Activated CD4-positive, alpha-beta T cell treated with anti-CD3 and anti-CD28 coated beads for 36 hours (primary cell): ENCODE measurements at regions of chr3 and their contacts with region 1.

Region 1: GRCh38 chr3:115658337-115659181 is 35.2 kb downstream of the GAP43 start:
- DNase-seq: peak; percentile 88
- ATAC-seq: peak; percentile 90
- H3K4me3 Mint-ChIP-seq: peak overlapping the region; percentile 66
- H3K27ac Mint-ChIP-seq: peak overlapping the region; percentile 95
- H3K4me1 Mint-ChIP-seq: peaks cover 51% of the 10 kb centered on the region
- H3K27me3 Mint-ChIP-seq: peaks cover 2% of the 10 kb centered on the region

Region 2: DNA sequence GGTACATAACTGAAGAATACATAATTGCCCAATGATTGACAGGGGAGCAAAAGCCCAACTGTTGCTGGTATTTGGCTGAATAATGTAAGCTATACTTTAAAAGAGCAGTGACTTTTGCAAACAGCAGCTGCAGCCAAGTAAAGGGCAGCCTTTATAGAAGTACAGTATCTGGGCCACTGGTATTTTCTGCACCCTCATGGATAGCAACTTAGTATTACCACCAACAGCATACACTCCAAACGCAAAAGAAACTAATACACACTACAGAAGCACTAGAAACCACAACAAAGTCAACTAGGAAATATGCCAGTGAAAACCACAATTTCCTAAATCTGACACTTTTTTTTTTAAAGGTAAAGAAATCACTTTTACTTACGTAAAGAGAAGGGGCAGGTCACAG is 1158.6 kb before region 1 on chr3:
- CTCF ChIA-PET with region 1: no interaction called
- POLR2A ChIA-PET with region 1: no interaction called
- intact Hi-C with region 1: loop called in 1 of 2 experiments (anchors 10 kb)
- DNase-seq: no peak
- ATAC-seq: peak; percentile 84
- H3K4me3 Mint-ChIP-seq: no peak overlapping the region
- H3K27ac Mint-ChIP-seq: no peak overlapping the region
- H3K4me1 Mint-ChIP-seq: peaks cover 34% of the 10 kb centered on the region
- H3K27me3 Mint-ChIP-seq: peaks cover 11% of the 10 kb centered on the region

Region 3: DNA sequence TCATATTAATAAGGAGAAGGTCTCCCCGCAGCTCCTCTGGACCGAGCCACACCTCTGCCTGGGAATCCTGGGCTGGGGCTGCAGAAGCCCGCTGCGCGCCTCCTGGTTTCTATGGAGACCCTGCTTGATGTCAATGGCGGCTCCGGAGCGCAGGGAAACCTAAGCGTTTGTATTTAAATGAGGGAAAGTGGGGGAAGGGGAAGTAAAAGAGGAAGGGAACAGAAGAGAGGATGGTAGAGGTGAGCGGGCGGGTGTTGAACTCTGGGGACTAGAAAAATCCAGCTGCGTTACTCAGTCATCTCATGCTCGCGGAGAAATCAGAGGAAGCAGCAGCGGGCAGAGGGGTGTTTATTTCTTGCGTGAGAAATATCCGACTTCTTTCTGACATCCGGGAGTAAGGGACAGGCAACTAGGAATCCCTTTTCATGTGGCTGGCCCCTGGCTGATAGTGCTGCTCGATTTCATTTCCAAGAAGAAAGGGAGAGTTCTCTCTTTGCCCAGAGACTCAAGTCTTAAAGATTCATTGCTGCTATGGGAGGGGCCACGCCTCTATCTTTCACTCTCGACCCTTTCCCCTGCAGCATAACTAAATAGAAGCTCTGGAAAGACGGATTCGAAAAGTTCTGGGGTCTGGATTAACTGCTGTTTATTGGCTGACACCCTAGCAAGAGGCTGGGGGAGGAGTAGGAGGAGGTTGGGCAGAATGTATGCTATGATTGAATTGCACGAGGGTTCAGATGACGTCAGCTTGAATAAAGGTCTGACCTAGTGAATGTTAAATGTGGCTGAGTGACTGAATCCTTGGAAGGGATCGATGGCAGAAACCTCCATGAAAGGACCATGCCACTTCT is 145.8 kb before region 1 on chr3:
- CTCF ChIA-PET with region 1: no interaction called
- POLR2A ChIA-PET with region 1: no interaction called
- intact Hi-C with region 1: loop called in 1 of 2 experiments (anchors 10 kb)
- DNase-seq: peak; percentile 43
- ATAC-seq: peak; percentile 71
- H3K4me3 Mint-ChIP-seq: peak overlapping the region; percentile 76
- H3K27ac Mint-ChIP-seq: peak overlapping the region; percentile 52
- H3K4me1 Mint-ChIP-seq: peaks cover 19% of the 10 kb centered on the region
- H3K27me3 Mint-ChIP-seq: peaks cover 45% of the 10 kb centered on the region

Region 4: DNA sequence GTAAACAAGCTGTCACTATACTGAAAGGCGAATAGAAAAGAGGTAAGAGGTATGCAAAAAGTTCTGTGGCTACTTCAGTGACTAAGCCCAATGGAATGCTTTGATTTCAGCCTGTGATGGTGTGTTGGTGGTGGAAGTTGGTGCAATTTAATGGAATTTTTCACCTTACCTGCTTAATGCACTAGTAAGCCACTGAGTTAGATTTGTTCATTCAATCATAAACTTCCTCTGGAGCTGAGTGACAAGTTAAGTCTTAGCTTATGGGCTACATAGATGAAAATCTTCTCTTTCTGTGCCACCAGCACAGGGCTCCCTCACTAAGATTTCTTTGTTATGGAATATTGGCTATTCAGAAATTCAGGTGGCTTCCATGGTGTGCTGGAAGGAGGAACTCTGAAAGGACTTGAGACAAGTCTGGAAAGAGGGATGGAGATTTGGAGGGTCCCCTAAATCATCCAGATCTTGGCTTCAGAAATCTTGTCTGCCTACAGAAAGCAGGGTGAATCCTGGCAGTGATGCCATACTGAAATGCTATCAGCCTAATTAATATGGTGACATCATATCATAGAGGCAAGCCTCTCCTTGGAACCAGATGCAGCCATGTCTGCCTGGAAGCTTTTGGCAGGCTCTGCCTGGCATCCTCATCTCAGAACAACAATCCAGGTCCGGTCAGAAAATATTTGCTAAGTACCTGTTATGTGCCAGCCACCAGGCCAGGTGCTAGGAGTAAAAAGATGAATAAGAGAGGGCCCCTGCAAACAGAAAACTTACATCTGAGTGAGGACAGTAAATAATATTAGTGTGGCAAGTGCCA is 43.4 kb before region 1 on chr3:
- CTCF ChIA-PET with region 1: no interaction called
- POLR2A ChIA-PET with region 1: no interaction called
- intact Hi-C with region 1: loop called (anchors 2 kb)
- DNase-seq: no peak
- ATAC-seq: no peak
- H3K4me3 Mint-ChIP-seq: no peak overlapping the region
- H3K27ac Mint-ChIP-seq: no peak overlapping the region
- H3K4me1 Mint-ChIP-seq: peaks cover 20% of the 10 kb centered on the region
- H3K27me3 Mint-ChIP-seq: peaks cover 21% of the 10 kb centered on the region

Region 5: DNA sequence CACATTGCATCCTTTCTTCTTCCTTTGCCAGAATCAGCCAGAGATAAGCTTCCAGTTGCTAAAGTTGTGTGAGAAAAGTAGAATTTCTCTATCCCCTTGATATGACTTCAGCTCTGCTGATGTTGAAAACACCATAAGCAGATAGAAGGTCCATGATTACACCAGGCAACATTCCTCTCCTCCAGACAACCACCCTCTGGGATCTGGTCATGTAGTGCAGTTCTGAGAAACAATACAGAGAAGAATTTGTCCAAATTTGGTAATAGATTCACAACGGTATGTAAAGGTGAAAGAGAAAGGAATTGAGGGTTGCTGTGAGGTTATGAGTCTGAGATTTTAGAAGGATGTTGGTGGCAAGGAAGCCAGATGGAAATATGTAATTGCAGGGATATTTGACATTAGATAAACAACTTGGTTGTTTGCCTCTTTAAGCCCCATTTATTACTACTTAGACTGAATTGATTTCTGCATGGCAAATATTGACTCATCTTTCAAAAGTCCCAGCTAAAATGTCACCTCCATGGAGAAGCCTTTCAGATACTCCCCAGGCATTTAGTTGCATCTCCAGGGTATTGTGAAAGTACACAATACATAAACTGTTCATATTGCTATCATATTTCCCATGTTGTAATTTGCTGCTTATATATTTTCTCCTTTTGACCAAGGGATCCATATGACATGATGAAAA is 99.7 kb after region 1 on chr3:
- CTCF ChIA-PET with region 1: no interaction called
- POLR2A ChIA-PET with region 1: no interaction called
- intact Hi-C with region 1: no loop called
- DNase-seq: no peak
- ATAC-seq: no peak
- H3K4me3 Mint-ChIP-seq: no peak overlapping the region
- H3K27ac Mint-ChIP-seq: no peak overlapping the region
- H3K4me1 Mint-ChIP-seq: no peaks in the 10 kb centered on the region
- H3K27me3 Mint-ChIP-seq: peaks cover 15% of the 10 kb centered on the region

Region 6: GRCh38 chr3:115790759-115791158 is 132.2 kb after region 1 on chr3:
- CTCF ChIA-PET with region 1: no interaction called
- POLR2A ChIA-PET with region 1: no interaction called
- intact Hi-C with region 1: loop called in 1 of 2 experiments (anchors 5 kb)
- DNase-seq: peak; percentile 75
- ATAC-seq: peak; percentile 95
- H3K4me3 Mint-ChIP-seq: no peak overlapping the region
- H3K27ac Mint-ChIP-seq: peak overlapping the region; percentile 25
- H3K4me1 Mint-ChIP-seq: peaks cover 33% of the 10 kb centered on the region
- H3K27me3 Mint-ChIP-seq: no peaks in the 10 kb centered on the region